ENCODE measurements at regions of chr1 and their contacts with region 1.

Region 1: DNA sequence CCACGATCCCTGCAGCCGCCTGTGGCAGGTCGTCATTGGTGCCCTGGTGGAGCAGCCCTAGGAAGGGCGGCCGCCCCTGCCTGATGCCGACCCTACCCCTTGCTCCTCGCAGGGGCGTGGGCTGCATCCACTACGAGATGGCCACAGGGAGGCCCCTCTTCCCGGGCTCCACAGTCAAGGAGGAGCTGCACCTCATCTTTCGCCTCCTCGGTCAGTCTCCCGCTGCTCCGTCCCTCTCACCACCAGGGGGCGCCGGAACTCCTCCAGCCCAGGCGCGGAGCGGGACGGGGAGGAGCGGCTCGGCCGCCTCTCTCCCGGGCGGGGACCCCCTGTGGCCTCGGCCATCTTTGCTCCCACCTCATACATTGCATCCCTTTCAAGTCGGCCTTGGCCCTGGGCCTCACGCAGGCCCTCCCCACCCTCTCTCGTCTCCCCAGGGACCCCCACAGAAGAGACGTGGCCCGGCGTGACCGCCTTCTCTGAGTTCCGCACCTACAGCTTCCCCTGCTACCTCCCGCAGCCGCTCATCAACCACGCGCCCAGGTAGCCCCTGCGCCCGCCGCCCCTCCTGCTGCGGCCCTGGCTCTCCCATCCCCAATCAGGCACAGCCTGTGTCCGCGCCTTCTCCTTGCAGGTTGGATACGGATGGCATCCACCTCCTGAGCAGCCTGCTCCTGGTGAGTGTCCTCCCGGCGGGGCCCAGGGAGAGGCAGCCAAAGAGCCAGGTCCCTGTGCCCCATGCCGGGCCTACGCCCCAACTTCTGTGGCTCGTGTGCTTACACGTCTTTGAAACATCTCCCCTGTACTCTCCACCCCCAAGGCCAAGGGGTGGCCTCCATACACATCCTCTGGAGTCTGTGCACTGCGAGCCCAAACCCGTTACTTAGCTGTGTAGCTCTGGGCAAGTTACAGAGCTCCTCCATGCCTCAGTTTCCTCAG is 24.7 kb downstream of the CDK18 start:
- DNase-seq: peak; percentile 50 to 65 (median 57)
- H3K4me3 ChIP-seq: peak overlapping the region in 1 of 3 experiments; percentile 30
- H3K4me3 Mint-ChIP-seq: peak overlapping the region; percentile 56 to 60
- H3K27ac ChIP-seq: no peak overlapping the region
- H3K27ac Mint-ChIP-seq: peak overlapping the region in 1 of 7 donors; percentile 18
- H3K4me1 ChIP-seq: peaks cover 6 to 9% of the 10 kb centered on the region in 2 donors
- H3K4me1 Mint-ChIP-seq: peaks cover 4% of the 10 kb centered on the region
- H3K27me3 ChIP-seq: no peaks in the 10 kb centered on the region
- H3K27me3 Mint-ChIP-seq: peaks cover 3 to 12% (median 4%) of the 10 kb centered on the region in 3 donors
- CTCF ChIP-seq: peak; percentile 96

Region 2: GRCh38 chr1:205273551-205273982 is 255.6 kb before region 1 on chr1:
- intact Hi-C with region 1: loop called in 1 of 2 experiments (anchors 10 kb)
- DNase-seq: peak; percentile 71 to 83 (median 79)
- H3K4me3 ChIP-seq: no peak overlapping the region
- H3K4me3 Mint-ChIP-seq: no peak overlapping the region
- H3K27ac ChIP-seq: no peak overlapping the region
- H3K27ac Mint-ChIP-seq: peak overlapping the region in 1 of 7 donors; percentile 30
- H3K4me1 ChIP-seq: peaks cover 4 to 5% of the 10 kb centered on the region in 2 donors
- H3K4me1 Mint-ChIP-seq: peaks cover 13% of the 10 kb centered on the region
- H3K27me3 ChIP-seq: no peaks in the 10 kb centered on the region
- H3K27me3 Mint-ChIP-seq: peaks cover 2 to 5% (median 3%) of the 10 kb centered on the region in 3 donors
- CTCF ChIP-seq: peak; percentile 98

Region 3: GRCh38 chr1:205335643-205336091 is 193.5 kb before region 1 on chr1:
- intact Hi-C with region 1: loop called in 1 of 2 experiments (anchors 10 kb)
- DNase-seq: peak; percentile 69 to 77 (median 74)
- H3K4me3 ChIP-seq: no peak overlapping the region
- H3K4me3 Mint-ChIP-seq: no peak overlapping the region
- H3K27ac ChIP-seq: no peak overlapping the region
- H3K27ac Mint-ChIP-seq: no peak overlapping the region
- H3K4me1 ChIP-seq: no peaks in the 10 kb centered on the region
- H3K4me1 Mint-ChIP-seq: no peaks in the 10 kb centered on the region
- H3K27me3 ChIP-seq: no peaks in the 10 kb centered on the region
- H3K27me3 Mint-ChIP-seq: peaks cover 7 to 22% (median 10%) of the 10 kb centered on the region in 3 donors
- CTCF ChIP-seq: peak; percentile 99

Region 4: GRCh38 chr1:205631727-205632373 is 102.7 kb after region 1 on chr1 and contains the start of gene ELK4:
- intact Hi-C with region 1: loop called (anchors 2 to 10 kb)
- DNase-seq: peak; percentile 96 to 98 (median 98)
- H3K4me3 ChIP-seq: peak within 1 kb of the TSS; percentile 73 to 99 (median 91)
- H3K4me3 Mint-ChIP-seq: peak within 1 kb of the TSS; percentile 98 to 100
- H3K27ac ChIP-seq: peak within 1 kb of the TSS; percentile 88 to 91
- H3K27ac Mint-ChIP-seq: peak within 1 kb of the TSS; percentile 94 to 99 (median 97)
- H3K4me1 ChIP-seq: peaks cover 17 to 25% of the 10 kb centered on the region in 2 donors
- H3K4me1 Mint-ChIP-seq: peaks cover 39% of the 10 kb centered on the region
- H3K27me3 ChIP-seq: no peaks in the 10 kb centered on the region
- H3K27me3 Mint-ChIP-seq: peaks cover 0 to 3% (median 0%) of the 10 kb centered on the region in 3 donors
- CTCF ChIP-seq: peak; percentile 75
- polyA plus RNA-seq, gene ELK4: 1.4 to 9.0 (median 2.6) TPM

Region 5: GRCh38 chr1:205658943-205659581 is 129.9 kb after region 1 on chr1:
- intact Hi-C with region 1: loop called (anchors 2 to 5 kb)
- DNase-seq: peak; percentile 61 to 74 (median 70)
- H3K4me3 ChIP-seq: no peak overlapping the region
- H3K4me3 Mint-ChIP-seq: no peak overlapping the region
- H3K27ac ChIP-seq: no peak overlapping the region
- H3K27ac Mint-ChIP-seq: peak overlapping the region in 1 of 7 donors; percentile 37
- H3K4me1 ChIP-seq: peaks cover 10% of the 10 kb centered on the region in 2 donors
- H3K4me1 Mint-ChIP-seq: peaks cover 10% of the 10 kb centered on the region
- H3K27me3 ChIP-seq: no peaks in the 10 kb centered on the region
- H3K27me3 Mint-ChIP-seq: peaks cover 2 to 8% (median 5%) of the 10 kb centered on the region in 3 donors
- CTCF ChIP-seq: peak; percentile 91

Region 6: DNA sequence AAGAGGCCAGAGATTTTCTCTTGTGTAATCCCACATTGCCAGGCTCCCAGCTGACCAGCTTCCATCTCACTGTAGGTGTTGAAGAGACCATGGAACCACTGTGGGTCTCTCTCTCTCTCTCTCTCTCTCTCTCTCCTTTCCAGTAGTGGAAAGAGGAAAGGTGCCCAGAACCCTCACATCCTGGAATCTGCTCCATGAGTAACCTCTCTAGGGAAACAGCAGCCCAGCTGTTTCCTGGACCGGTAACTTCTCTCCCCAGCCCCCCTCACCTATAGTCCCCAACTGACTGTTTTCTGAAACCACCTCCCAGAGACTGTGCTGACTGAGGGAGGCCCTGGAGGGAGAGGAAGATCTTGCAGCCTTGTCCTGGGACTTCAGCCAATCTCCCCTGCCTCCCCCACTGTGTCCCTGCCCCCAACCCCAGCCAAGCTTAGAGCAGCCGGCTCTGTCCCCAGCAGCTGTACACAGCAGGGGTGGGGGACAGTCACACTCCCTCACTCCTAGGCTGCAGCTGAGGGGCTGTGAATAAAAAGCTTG is 171.8 kb after region 1 on chr1:
- intact Hi-C with region 1: no loop called
- DNase-seq: no peak
- H3K4me3 ChIP-seq: no peak overlapping the region
- H3K4me3 Mint-ChIP-seq: no peak overlapping the region
- H3K27ac ChIP-seq: no peak overlapping the region
- H3K27ac Mint-ChIP-seq: no peak overlapping the region
- H3K4me1 ChIP-seq: peaks cover 16 to 19% of the 10 kb centered on the region in 2 donors
- H3K4me1 Mint-ChIP-seq: peaks cover 20% of the 10 kb centered on the region
- H3K27me3 ChIP-seq: peaks cover 0 to 6% of the 10 kb centered on the region in 2 donors
- H3K27me3 Mint-ChIP-seq: peaks cover 12 to 23% (median 20%) of the 10 kb centered on the region in 3 donors
- CTCF ChIP-seq: no peak

Measured in CD14-positive monocyte (primary cell).